ENCODE measurements at regions of chr4 and their contacts with region 1.

Region 1: DNA sequence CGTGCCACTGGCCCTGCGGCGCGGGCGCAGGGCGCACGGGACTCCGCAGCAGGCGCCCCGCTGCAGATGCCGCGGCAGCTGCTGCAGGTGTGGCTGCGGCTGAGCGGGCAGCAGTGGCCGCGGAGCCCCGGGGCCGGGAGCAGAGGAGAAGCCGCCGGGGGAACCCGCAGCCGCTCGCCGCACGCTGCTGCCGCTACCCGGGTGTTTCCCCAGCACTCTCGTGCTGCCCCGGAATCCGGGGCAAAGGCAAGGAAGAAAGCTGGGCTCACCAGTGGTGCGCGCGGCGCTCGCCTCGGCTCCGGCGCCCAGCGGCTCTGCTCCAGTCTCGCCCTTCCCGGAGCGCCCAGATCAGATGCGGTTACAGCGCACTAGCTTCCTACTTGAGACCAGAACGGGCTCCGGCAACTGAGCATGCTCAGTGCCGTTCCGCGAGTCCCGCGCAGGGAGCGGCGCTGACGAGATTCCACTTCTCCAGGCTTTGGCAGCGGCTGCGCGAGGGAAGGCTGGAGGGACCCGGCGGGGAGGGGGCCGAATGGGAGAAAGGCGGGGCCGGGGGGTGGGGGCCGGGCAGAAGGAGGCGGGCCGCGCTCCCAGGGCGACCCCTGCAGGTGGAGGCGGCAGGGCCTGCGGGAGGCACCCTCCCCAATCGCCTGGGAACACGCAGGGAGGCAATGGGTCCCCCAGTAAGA is at the start of gene APBB2:
- DNase-seq: peak; percentile 92 to 98
- H3K4me3 ChIP-seq: peak within 1 kb of the TSS; percentile 86
- CTCF ChIP-seq: no peak
- POLR2A ChIP-seq: no peak
- total RNA-seq, gene APBB2: 24.0 to 49.2 (median 43.3) TPM

Region 2: GRCh38 chr4:40525811-40526598 is 688.3 kb before region 1 on chr4:
- intact Hi-C with region 1: no loop called
- DNase-seq: peak in 1 of 2 donors; percentile 43
- H3K4me3 ChIP-seq: no peak overlapping the region
- CTCF ChIP-seq: no peak
- POLR2A ChIP-seq: no peak

Region 3: DNA sequence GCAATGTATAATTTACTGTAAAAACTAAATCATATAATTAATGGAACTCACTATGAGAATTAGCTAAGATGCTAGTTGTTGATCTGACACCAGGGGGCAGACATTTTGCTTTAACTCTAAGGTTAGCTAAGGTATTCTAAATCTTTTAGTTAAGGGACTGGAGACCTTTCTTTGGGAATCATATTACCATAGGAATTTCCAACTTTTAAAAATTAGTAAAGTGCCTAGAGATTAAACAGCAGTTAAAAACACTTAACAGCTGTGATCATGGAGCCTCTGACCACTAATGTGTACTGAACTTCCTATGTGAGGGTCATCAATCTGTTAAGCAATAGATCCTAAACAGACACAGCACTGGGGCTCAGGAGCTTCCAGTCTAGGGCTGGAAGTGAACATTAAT is 237.9 kb before region 1 on chr4:
- intact Hi-C with region 1: loop called (anchors 5 kb)
- DNase-seq: peak in 1 of 2 donors; percentile 41
- H3K4me3 ChIP-seq: no peak overlapping the region
- CTCF ChIP-seq: peak in 1 of 3 donors; percentile 10
- POLR2A ChIP-seq: no peak

Region 4: GRCh38 chr4:41185614-41186597 is 28.4 kb before region 1 on chr4:
- intact Hi-C with region 1: no loop called
- DNase-seq: no peak
- H3K4me3 ChIP-seq: no peak overlapping the region
- CTCF ChIP-seq: no peak
- POLR2A ChIP-seq: no peak

Measured in lower leg skin (tissue), 4 donors.